Left cardiac atrium (tissue), 4 donors: ENCODE measurements at regions of chr16 and their contacts with region 1.

Region 1: GRCh38 chr16:68040507-68041288 is 17.6 kb downstream of the DUS2 start:
- DNase-seq: peak; percentile 86
- ATAC-seq: peak; percentile 95 to 96

Region 2: DNA sequence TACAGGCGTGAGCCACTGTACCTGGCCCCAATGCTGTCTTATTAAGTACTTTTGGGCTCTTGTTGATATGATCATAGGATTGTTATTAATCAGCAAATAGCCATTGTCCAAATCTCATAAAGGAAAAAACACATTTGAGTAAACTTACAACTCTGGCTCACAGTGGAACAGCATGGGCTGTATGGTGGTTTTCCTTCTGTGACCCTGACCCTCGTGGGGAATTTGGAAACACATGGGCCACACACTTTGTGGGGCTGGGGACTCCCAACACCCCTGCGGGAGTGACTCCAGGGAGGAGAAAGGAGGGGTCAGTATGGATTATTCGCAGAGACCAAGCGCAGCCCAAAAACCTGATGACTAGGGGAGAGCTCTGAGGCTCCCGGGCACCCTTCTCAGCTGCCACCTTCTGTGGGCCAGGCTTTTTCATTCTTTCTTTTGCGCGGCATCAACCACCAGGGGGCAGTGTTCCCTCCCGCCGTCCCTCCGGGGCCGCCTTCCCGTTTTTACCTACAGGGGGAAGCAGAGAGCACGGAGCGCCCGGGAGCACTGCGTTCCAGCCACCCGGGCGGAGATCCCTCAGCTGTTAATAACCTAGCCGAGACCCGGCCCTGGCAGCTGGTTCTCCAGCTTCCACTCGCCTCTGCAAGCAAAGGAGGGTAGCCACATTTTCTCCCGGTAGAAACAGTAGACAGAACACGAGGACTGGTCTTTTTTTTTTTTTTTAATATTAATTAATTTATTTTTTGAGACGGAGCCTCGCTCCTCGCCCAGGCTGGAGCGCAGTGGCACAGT is 224.3 kb before region 1 on chr16:
- intact Hi-C with region 1: loop called (anchors 2 to 10 kb)
- DNase-seq: peak; percentile 87
- ATAC-seq: peak; percentile 95

Region 3: DNA sequence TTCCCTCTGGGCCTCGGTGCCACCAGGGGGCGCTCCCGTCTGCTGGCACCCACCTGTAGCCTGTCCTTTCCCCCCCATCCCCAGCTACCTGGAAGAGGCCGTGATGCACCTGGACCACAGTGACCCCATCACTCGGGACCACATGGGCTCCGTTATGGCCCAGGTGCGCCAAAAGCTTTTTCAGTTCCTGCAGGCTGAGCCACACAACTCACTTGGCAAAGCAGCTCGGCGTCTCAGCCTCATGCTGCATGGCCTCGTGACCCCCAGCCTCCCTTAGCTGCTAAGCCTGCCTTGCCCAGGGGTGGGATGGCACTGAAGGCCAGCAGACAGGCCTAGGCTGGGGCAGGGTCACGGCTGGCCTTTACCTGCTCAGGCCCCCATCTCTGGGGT is 156.8 kb before region 1 on chr16:
- intact Hi-C with region 1: loop called in 1 of 2 experiments (anchors 5 kb)
- DNase-seq: peak; percentile 63
- ATAC-seq: peak; percentile 54 to 69

Region 4: DNA sequence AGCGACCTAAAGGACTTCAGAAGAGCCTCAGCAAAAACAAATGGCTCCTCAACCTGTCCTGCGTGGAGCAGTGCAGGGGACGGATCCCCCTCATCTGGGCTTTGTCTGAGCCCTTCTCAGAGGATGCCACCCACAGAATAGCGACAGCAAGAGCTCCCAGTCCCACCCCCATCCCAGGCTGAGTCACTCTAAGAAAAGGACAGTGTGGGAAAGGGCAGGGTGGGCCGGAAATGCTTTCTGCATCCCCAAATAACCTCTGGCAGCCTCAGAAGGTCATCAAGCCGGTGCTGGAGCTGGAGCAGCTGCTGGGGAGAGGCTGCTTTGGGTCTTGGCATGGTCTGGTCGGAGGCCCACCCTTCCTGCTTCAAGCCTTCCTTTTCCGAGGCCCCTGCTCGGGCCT is 81.2 kb before region 1 on chr16:
- intact Hi-C with region 1: no loop called
- DNase-seq: peak; percentile 88
- ATAC-seq: peak; percentile 70 to 77

Region 5: DNA sequence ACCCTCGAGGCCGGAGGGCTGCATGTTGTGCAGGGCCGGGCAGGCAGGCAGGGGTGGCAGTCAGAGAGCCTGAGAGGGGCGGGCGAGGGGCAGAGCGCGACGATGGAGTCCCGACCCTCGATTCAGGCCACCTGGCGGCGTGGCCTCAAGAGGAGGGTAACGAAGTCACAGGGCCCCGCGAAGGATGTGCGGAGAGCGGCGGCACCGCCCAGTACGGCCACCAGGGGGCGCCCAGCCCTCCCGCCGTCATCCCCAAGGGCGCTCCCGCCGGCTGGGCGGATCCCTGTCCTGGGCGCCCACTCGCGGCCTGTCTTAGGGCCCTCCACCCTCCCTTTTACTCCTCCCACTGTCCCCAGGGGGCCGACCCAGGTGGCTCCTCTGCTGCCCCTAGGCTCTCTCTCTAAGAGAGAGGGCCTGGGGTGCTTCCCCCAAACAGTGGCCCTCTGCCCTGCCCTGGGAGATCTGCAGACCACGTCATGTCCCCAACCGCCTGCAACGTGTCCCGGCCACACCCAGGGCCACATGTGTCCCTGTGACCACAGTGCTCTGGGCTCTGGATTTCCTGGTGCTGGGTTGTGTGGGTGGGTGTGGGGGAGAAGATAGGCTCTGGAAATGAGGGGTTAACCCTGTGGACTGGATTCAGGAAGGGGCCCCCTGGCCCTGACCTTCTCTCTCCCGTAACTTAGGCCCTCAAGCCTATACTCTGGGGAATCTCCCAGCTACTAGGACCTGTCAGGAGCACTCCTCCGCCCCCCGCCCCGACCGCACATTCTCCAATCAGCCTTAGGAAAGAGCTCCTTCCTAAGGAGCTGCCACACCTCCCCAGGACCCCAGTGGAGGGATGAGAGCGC is 47.3 kb before region 1 on chr16:
- intact Hi-C with region 1: loop called in 1 of 2 experiments (anchors 5 kb)
- DNase-seq: peak; percentile 88
- ATAC-seq: peak; percentile 94 to 97